CD8-positive, alpha-beta memory T cell (primary cell): ENCODE measurements at regions of chr9 and their contacts with region 1.

Region 1: GRCh38 chr9:6703898-6704639 is 53.7 kb upstream of the KDM4C start:
- DNase-seq: peak; percentile 74 to 92 (median 78)
- H3K4me3 ChIP-seq: peak overlapping the region; percentile 92
- H3K4me3 Mint-ChIP-seq: peak overlapping the region; percentile 83 to 97 (median 92)
- H3K27ac ChIP-seq: peak overlapping the region; percentile 93
- H3K27ac Mint-ChIP-seq: peak overlapping the region; percentile 92 to 97 (median 94)
- H3K4me1 ChIP-seq: peaks cover 5% of the 10 kb centered on the region
- H3K4me1 Mint-ChIP-seq: peaks cover 6 to 18% (median 7%) of the 10 kb centered on the region in 3 donors
- H3K27me3 ChIP-seq: no peaks in the 10 kb centered on the region
- H3K27me3 Mint-ChIP-seq: peaks cover 0 to 2% of the 10 kb centered on the region in 2 donors

Region 2: GRCh38 chr9:6757456-6758247 is 53.6 kb after region 1 on chr9 and contains the start of gene KDM4C:
- CTCF ChIA-PET with region 1: interaction called, 8 read pairs
- POLR2A ChIA-PET with region 1: interaction called, 41 read pairs
- DNase-seq: peak; percentile 90 to 97 (median 93)
- H3K4me3 ChIP-seq: peak within 1 kb of the TSS; percentile 86
- H3K4me3 Mint-ChIP-seq: peak within 1 kb of the TSS; percentile 94 to 99 (median 97)
- H3K27ac ChIP-seq: peak within 1 kb of the TSS; percentile 97
- H3K27ac Mint-ChIP-seq: peak within 1 kb of the TSS; percentile 99 to 100 (median 100)
- H3K4me1 ChIP-seq: peaks cover 14% of the 10 kb centered on the region
- H3K4me1 Mint-ChIP-seq: peaks cover 28 to 44% (median 38%) of the 10 kb centered on the region in 3 donors
- H3K27me3 ChIP-seq: no peaks in the 10 kb centered on the region
- H3K27me3 Mint-ChIP-seq: peaks cover 0 to 7% of the 10 kb centered on the region in 2 donors
- total RNA-seq, gene KDM4C: 25.9 to 26.8 TPM